ENCODE measurements at regions of chr20 and their contacts with region 1.

Region 1: GRCh38 chr20:50189681-50190582 is 698 bp upstream of the CEBPB start:
- DNase-seq: peak; percentile 87
- H3K4me3 Mint-ChIP-seq: peak overlapping the region; percentile 56
- H3K27ac Mint-ChIP-seq: peak overlapping the region; percentile 35
- H3K4me1 Mint-ChIP-seq: peaks cover 31% of the 10 kb centered on the region
- H3K27me3 Mint-ChIP-seq: peaks cover 10% of the 10 kb centered on the region

Region 2: DNA sequence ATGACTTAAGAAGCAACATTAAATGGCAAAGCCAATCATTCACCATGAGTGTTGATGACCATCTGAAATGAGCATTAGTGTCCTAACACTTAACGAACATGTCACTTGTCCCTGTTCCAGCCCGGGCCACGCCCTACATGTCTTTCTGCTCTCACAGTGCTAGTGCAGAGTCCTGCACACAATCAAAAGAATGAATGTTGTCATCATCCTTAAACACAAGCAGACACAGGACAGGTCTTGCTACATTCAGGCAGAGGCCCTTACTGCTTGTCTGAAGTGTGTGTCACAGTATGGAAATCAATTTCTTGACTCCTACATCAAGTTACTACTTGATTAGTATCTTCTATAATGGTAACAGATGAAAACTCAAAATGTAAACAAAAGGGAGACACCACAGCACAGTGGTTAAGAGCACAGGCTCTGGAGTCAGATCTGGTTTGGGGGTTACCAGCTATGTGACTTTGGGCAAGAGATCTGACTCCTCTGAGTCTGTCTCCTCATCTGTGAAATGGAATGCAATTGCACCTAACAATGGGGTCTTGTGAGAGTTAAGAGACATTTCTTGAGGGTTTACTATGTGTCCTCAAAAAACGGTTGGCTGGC is 94.4 kb before region 1 on chr20:
- CTCF ChIA-PET with region 1: no interaction called
- POLR2A ChIA-PET with region 1: no interaction called
- DNase-seq: no peak
- H3K4me3 Mint-ChIP-seq: no peak overlapping the region
- H3K27ac Mint-ChIP-seq: no peak overlapping the region
- H3K4me1 Mint-ChIP-seq: peaks cover 23% of the 10 kb centered on the region
- H3K27me3 Mint-ChIP-seq: no peaks in the 10 kb centered on the region

Region 3: GRCh38 chr20:50237349-50238085 is 47.6 kb after region 1 on chr20:
- CTCF ChIA-PET with region 1: no interaction called
- POLR2A ChIA-PET with region 1: no interaction called
- DNase-seq: no peak
- H3K4me3 Mint-ChIP-seq: no peak overlapping the region
- H3K27ac Mint-ChIP-seq: no peak overlapping the region
- H3K4me1 Mint-ChIP-seq: peaks cover 12% of the 10 kb centered on the region
- H3K27me3 Mint-ChIP-seq: peaks cover 21% of the 10 kb centered on the region

Region 4: DNA sequence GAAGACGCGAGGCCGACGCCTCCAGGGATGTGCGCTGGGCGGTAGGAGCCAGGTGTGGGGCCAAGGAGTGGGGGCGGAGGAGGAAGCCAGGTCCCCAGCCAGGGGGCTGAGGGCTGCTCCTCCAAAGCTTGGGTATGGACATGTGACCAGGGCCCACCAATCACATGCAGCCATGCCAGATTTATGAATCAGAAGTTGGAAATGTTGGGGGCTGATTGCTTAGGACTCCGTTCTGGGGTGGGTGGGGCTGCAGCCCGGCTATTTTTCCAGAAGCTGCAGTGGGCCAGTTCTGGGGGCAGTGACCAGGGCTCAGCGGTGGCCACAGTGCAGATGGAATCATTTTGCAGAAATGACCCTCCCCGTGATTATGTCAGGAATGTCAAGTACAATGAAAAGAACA is 96.7 kb after region 1 on chr20:
- CTCF ChIA-PET with region 1: interaction called, 9 read pairs
- POLR2A ChIA-PET with region 1: interaction called, 10 read pairs
- DNase-seq: no peak
- H3K4me3 Mint-ChIP-seq: no peak overlapping the region
- H3K27ac Mint-ChIP-seq: no peak overlapping the region
- H3K4me1 Mint-ChIP-seq: peaks cover 44% of the 10 kb centered on the region
- H3K27me3 Mint-ChIP-seq: no peaks in the 10 kb centered on the region

Region 5: GRCh38 chr20:50338479-50339391 is 148.8 kb after region 1 on chr20:
- CTCF ChIA-PET with region 1: interaction called, 11 read pairs
- POLR2A ChIA-PET with region 1: interaction called, 15 read pairs
- DNase-seq: peak; percentile 78
- H3K4me3 Mint-ChIP-seq: peak overlapping the region; percentile 58
- H3K27ac Mint-ChIP-seq: peak overlapping the region; percentile 87
- H3K4me1 Mint-ChIP-seq: peaks cover 69% of the 10 kb centered on the region
- H3K27me3 Mint-ChIP-seq: no peaks in the 10 kb centered on the region

Region 6: DNA sequence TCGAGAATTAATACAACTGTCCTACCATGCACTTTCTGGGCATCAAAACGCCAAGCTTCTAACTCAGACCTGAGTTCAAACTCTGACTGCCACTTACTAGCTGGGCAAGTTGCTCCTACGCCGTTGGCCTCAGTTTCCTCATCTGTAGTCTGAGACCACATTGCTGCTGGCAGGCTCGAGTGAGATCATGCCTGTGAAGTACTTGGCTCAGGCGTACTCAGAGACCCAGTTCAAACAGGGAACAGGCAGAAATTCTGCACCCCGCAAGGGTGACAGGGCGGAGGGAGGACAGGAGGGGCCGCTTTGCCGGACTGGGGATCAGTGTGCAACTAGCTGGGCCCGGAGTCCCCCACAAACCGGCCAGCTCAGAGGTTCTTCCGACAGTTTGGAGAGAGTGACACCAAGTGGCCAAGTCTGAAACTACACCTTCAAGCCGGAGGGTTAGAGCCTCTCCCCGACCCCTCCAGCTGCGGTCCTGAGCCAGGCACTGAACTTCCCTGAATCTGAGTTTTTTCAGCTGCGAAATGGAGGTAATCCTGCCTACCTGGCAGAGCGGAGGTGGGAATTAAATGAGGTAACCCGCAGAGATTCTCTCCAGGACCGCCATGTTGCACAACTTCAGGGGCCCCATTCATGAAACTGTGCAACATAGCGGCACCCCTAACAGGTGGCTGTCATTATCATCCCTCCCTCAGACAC is 274.2 kb after region 1 on chr20:
- CTCF ChIA-PET with region 1: interaction called, 82 read pairs
- POLR2A ChIA-PET with region 1: interaction called, 14 read pairs
- DNase-seq: peak; percentile 63
- H3K4me3 Mint-ChIP-seq: no peak overlapping the region
- H3K27ac Mint-ChIP-seq: no peak overlapping the region
- H3K4me1 Mint-ChIP-seq: peaks cover 14% of the 10 kb centered on the region
- H3K27me3 Mint-ChIP-seq: peaks cover 8% of the 10 kb centered on the region

Measured in activated CD4-positive, alpha-beta memory T cell treated with anti-CD3 and anti-CD28 coated beads, Interleukin-2, amount 10 ng/mL, durations not matched to agents 7 days and 5 days (primary cell).